Psoas muscle (tissue), 8 donors: ENCODE measurements at regions of chr9 and their contacts with region 1.

Region 1: GRCh38 chr9:90142580-90142979 is 500.0 kb downstream of the DIRAS2 start:
- DNase-seq: no peak
- ATAC-seq: no peak
- H3K4me3 ChIP-seq: no peak overlapping the region
- H3K27ac ChIP-seq: no peak overlapping the region
- H3K4me1 ChIP-seq: peaks cover 6% of the 10 kb centered on the region
- H3K27me3 ChIP-seq: no peaks in the 10 kb centered on the region
- CTCF ChIP-seq: peak; percentile 67

Region 2: GRCh38 chr9:90156315-90156714 is 13.7 kb after region 1 on chr9:
- intact Hi-C with region 1: no loop called
- DNase-seq: no peak
- ATAC-seq: no peak
- H3K4me3 ChIP-seq: no peak overlapping the region
- H3K27ac ChIP-seq: no peak overlapping the region
- H3K4me1 ChIP-seq: no peaks in the 10 kb centered on the region
- H3K27me3 ChIP-seq: no peaks in the 10 kb centered on the region
- CTCF ChIP-seq: no peak

Region 3: GRCh38 chr9:90642570-90643539 is 500.3 kb after region 1 on chr9 and contains the start of gene DIRAS2:
- intact Hi-C with region 1: loop called in 1 of 2 experiments (anchors 5 kb)
- DNase-seq: peak; percentile 24 to 55
- ATAC-seq: peak; percentile 78 to 85 (median 82)
- H3K4me3 ChIP-seq: peak within 1 kb of the TSS; percentile 65
- H3K27ac ChIP-seq: no peak within 1 kb of the TSS
- H3K4me1 ChIP-seq: peaks cover 3% of the 10 kb centered on the region
- H3K27me3 ChIP-seq: peaks cover 0 to 29% (median 0%) of the 10 kb centered on the region in 3 donors
- CTCF ChIP-seq: peak; percentile 31
- total RNA-seq, gene DIRAS2: 0.05 TPM in 1 of 4 donors, not detected in the others

Region 4: GRCh38 chr9:90870621-90871326 is 728.2 kb after region 1 on chr9:
- intact Hi-C with region 1: loop called (anchors 2 to 5 kb)
- DNase-seq: no peak
- ATAC-seq: peak in 3 of 4 donors; percentile 51 to 58 (median 58)
- H3K4me3 ChIP-seq: no peak overlapping the region
- H3K27ac ChIP-seq: no peak overlapping the region
- H3K4me1 ChIP-seq: peaks cover 9% of the 10 kb centered on the region
- H3K27me3 ChIP-seq: no peaks in the 10 kb centered on the region
- CTCF ChIP-seq: peak; percentile 91